ENCODE measurements at regions of chr2 and their contacts with region 1.

Region 1: DNA sequence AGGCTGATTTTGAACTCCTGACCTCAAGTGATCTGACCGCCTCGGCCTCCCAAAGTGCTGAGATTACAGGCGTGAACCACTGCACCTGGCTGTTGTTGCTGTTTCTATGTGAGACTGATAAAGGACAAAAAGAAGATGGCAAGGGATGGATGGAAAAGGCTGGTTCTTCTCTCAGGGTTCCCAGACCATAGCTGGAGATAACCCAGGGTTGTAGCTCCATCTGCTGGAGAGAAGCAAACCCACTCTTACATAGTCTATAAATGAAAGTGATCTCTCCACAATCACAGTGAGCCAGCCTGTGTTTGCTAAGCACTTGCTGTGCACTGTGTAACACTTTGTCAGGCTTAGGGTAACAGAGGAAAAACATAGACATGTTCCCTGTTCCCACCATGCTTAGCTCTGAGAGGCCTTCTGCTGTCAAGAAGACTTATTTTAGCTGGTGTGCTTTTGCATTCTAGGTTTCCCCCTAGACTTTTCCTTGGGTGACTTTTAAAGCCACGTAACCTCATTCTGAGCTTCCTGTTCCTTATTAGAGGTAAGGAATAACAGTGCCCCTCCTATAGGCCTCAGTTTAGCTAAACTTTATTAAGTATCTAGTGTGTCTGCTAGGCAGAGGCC is 49.7 kb downstream of the LIMS1 start:
- DNase-seq: peak; percentile 6 to 76 (median 52)
- ATAC-seq: peak; percentile 92
- H3K4me3 ChIP-seq: no peak overlapping the region
- H3K4me3 Mint-ChIP-seq: peak overlapping the region; percentile 27
- H3K27ac ChIP-seq: no peak overlapping the region
- H3K27ac Mint-ChIP-seq: no peak overlapping the region
- H3K4me1 ChIP-seq: peaks cover 5% of the 10 kb centered on the region
- H3K4me1 Mint-ChIP-seq: peaks cover 15% of the 10 kb centered on the region
- H3K27me3 ChIP-seq: no peaks in the 10 kb centered on the region
- H3K27me3 Mint-ChIP-seq: no peaks in the 10 kb centered on the region
- CTCF ChIP-seq: peak; percentile 68

Region 2: GRCh38 chr2:107936433-107937359 is 647.3 kb before region 1 on chr2:
- CTCF ChIA-PET with region 1: interaction called, 4 read pairs
- POLR2A ChIA-PET with region 1: no interaction called
- intact Hi-C with region 1: loop called (anchors 5 kb)
- DNase-seq: peak in 1 of 9 experiments; percentile 2
- ATAC-seq: no peak
- H3K4me3 ChIP-seq: no peak overlapping the region
- H3K4me3 Mint-ChIP-seq: no peak overlapping the region
- H3K27ac ChIP-seq: no peak overlapping the region
- H3K27ac Mint-ChIP-seq: no peak overlapping the region
- H3K4me1 ChIP-seq: no peaks in the 10 kb centered on the region
- H3K4me1 Mint-ChIP-seq: no peaks in the 10 kb centered on the region
- H3K27me3 ChIP-seq: no peaks in the 10 kb centered on the region
- H3K27me3 Mint-ChIP-seq: peaks cover 10% of the 10 kb centered on the region
- CTCF ChIP-seq: no peak

Region 3: GRCh38 chr2:108351889-108352288 is 232.1 kb before region 1 on chr2:
- CTCF ChIA-PET with region 1: interaction called, 6 read pairs
- POLR2A ChIA-PET with region 1: no interaction called
- intact Hi-C with region 1: loop called in 1 of 2 experiments (anchors 1 kb)
- DNase-seq: no peak
- ATAC-seq: no peak
- H3K4me3 ChIP-seq: no peak overlapping the region
- H3K4me3 Mint-ChIP-seq: no peak overlapping the region
- H3K27ac ChIP-seq: no peak overlapping the region
- H3K27ac Mint-ChIP-seq: no peak overlapping the region
- H3K4me1 ChIP-seq: no peaks in the 10 kb centered on the region
- H3K4me1 Mint-ChIP-seq: no peaks in the 10 kb centered on the region
- H3K27me3 ChIP-seq: peaks cover 0 to 5% of the 10 kb centered on the region in 2 experiments
- H3K27me3 Mint-ChIP-seq: peaks cover 13% of the 10 kb centered on the region
- CTCF ChIP-seq: no peak

Region 4: GRCh38 chr2:108417255-108417654 is 166.8 kb before region 1 on chr2:
- CTCF ChIA-PET with region 1: no interaction called
- POLR2A ChIA-PET with region 1: no interaction called
- intact Hi-C with region 1: loop called in 1 of 2 experiments (anchors 1 kb)
- DNase-seq: peak in 2 of 9 experiments; percentile 9 to 28
- ATAC-seq: no peak
- H3K4me3 ChIP-seq: no peak overlapping the region
- H3K4me3 Mint-ChIP-seq: no peak overlapping the region
- H3K27ac ChIP-seq: no peak overlapping the region
- H3K27ac Mint-ChIP-seq: no peak overlapping the region
- H3K4me1 ChIP-seq: no peaks in the 10 kb centered on the region
- H3K4me1 Mint-ChIP-seq: no peaks in the 10 kb centered on the region
- H3K27me3 ChIP-seq: no peaks in the 10 kb centered on the region
- H3K27me3 Mint-ChIP-seq: no peaks in the 10 kb centered on the region
- CTCF ChIP-seq: no peak

Region 5: DNA sequence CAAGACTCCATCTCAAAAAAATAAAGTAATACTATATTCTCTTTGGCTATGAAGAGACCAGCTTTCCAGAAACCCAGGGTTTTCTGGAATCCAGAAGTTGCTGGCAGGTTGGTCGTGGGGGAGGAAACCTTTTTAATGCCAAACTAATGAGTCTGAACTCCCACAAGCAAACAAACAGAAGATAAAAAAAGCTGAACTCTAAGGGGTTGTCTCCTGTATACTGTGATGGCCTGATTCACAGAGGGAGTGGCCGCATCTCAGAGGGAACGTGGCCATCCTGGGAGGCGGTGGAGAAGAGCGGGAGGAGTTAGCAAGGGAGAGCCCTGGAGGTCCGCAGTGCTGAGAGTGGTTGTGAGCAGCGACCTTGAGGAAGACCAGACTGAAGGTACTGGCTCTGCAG is 13.6 kb before region 1 on chr2:
- CTCF ChIA-PET with region 1: interaction called, 14 read pairs
- POLR2A ChIA-PET with region 1: no interaction called
- intact Hi-C with region 1: no loop called
- DNase-seq: no peak
- ATAC-seq: no peak
- H3K4me3 ChIP-seq: no peak overlapping the region
- H3K4me3 Mint-ChIP-seq: no peak overlapping the region
- H3K27ac ChIP-seq: no peak overlapping the region
- H3K27ac Mint-ChIP-seq: no peak overlapping the region
- H3K4me1 ChIP-seq: peaks cover 3% of the 10 kb centered on the region
- H3K4me1 Mint-ChIP-seq: peaks cover 13% of the 10 kb centered on the region
- H3K27me3 ChIP-seq: no peaks in the 10 kb centered on the region
- H3K27me3 Mint-ChIP-seq: no peaks in the 10 kb centered on the region
- CTCF ChIP-seq: no peak

Region 6: GRCh38 chr2:108637304-108637669 is 53.3 kb after region 1 on chr2:
- CTCF ChIA-PET with region 1: interaction called, 27 read pairs
- POLR2A ChIA-PET with region 1: no interaction called
- intact Hi-C with region 1: no loop called
- DNase-seq: peak in 1 of 9 experiments; percentile 34
- ATAC-seq: no peak
- H3K4me3 ChIP-seq: no peak overlapping the region
- H3K4me3 Mint-ChIP-seq: no peak overlapping the region
- H3K27ac ChIP-seq: no peak overlapping the region
- H3K27ac Mint-ChIP-seq: no peak overlapping the region
- H3K4me1 ChIP-seq: no peaks in the 10 kb centered on the region
- H3K4me1 Mint-ChIP-seq: peaks cover 25% of the 10 kb centered on the region
- H3K27me3 ChIP-seq: no peaks in the 10 kb centered on the region
- H3K27me3 Mint-ChIP-seq: no peaks in the 10 kb centered on the region
- CTCF ChIP-seq: no peak